Heart left ventricle (tissue), 16 donors: ENCODE measurements at regions of chr9 and their contacts with region 1.

Region 1: DNA sequence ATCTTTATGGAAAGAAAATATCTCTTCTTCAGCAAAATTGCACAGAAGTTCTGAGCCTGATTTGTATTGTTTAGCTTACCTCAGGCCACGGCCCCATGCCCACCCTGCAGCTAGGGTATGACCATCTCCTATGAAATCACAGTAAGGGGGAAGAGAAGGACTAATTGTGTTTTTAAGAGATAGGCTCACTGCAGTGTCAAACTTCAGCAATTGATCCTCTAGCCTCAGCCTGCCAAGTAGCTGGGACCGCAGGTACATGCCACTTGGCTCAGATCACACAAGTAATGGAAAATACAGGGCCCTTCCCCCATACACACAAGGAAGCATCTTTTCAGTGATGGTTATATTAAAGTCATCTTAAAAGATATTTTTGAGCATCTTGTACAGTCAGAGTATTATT is 60.0 kb downstream of the DMAC1 start:
- DNase-seq: no peak
- ATAC-seq: no peak
- H3K4me3 ChIP-seq: no peak overlapping the region
- H3K27ac ChIP-seq: no peak overlapping the region
- H3K4me1 ChIP-seq: no peaks in the 10 kb centered on the region
- H3K27me3 ChIP-seq: no peaks in the 10 kb centered on the region
- CTCF ChIP-seq: no peak
- POLR2A ChIP-seq: no peak

Region 2: DNA sequence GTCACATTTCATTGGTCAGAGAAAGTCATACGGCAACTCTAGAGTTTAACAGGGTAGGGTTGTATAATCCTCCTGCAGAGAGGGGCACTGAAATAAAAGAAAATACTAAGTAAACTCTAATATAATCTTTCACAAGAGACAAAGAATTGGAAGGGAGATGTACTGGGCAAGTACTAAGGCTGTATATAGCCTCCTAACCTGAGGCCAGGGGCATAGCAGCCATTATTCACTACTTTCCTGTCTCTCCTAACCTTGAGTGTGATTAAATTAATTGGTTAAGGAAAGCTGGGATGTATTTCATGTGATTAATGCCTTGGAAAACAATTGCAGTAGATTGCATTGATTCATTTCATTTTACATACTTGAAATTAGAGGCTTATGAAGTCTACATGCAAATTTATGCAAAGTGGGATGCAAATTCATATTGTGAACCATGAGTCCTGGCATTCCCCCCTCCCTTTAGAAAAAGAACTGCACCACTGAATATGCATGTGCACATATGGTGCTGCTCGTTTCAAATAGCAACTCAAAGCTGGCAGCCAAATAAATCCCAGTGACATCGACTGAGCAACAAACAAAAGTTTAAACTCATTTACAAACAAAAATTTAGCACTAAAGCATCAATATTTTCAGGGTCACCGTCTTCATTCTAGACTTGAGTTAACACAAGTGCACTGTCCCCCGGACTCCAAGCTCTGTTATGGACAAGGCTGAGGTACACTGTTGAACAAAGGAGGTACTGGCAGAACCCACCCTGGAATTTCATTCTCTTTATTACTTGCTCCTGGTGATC is 10.0 kb before region 1 on chr9:
- intact Hi-C with region 1: loop called in 1 of 10 experiments (anchors 1 kb)
- DNase-seq: no peak
- ATAC-seq: no peak
- H3K4me3 ChIP-seq: no peak overlapping the region
- H3K27ac ChIP-seq: no peak overlapping the region
- H3K4me1 ChIP-seq: no peaks in the 10 kb centered on the region
- H3K27me3 ChIP-seq: no peaks in the 10 kb centered on the region
- CTCF ChIP-seq: no peak
- POLR2A ChIP-seq: no peak